Naive thymus-derived CD8-positive, alpha-beta T cell (primary cell): ENCODE measurements at regions of chr3 and their contacts with region 1.

Region 1: DNA sequence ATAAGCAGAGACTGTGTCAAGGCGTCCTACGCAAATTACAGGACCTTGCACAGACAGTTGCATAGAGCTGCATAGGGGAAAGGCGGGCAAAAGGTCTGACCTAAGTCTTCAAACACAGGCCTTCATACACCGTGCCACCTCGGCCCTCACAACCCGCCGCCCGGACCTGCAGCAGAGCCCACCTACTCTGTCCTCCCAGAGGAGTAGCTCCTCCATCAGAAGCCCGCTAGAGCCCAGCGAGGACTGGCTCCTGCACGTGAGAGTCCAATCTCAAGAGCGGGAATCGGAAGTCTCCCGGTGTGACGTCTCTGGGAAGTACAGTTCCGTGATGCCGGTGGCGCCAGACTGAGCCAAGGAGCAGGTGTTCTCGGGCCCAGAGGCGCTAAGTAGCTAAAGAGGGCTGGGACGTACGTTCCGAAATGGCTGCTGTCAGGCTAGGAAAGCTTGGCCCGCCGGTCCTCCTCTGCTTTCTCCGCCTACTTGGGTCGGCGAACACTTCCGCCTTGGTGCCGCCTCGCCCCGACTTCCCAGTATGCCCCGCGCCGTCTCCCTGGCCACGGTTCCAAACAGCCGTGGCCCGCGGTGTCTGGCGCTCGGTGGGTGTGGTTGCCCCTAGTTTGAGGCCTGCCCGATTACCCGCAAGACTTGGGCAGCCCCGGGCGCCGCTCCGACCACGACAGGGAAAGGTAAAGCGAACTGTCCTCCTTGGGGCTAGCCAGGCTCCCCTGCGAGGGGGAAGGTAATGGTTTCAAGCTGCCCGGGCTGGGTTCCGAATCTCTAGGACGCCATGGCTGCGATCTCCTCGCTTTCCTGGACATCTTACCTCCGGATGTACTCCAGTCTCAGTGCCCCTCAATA is at the starts of genes ASTE1 and NEK11:
- DNase-seq: peak; percentile 84 to 97 (median 94)
- ATAC-seq: peak; percentile 93 to 95
- H3K4me3 Mint-ChIP-seq: peak within 1 kb of the TSS; percentile 87 to 96 (median 92)
- H3K27ac Mint-ChIP-seq: peak within 1 kb of the TSS; percentile 96 to 99 (median 98)
- H3K4me1 Mint-ChIP-seq: peaks cover 28 to 60% (median 55%) of the 10 kb centered on the region in 4 donors
- H3K27me3 Mint-ChIP-seq: no peaks in the 10 kb centered on the region
- polyA plus RNA-seq, gene ASTE1: 16.3 to 25.4 (median 22.8) TPM
- polyA plus RNA-seq, gene NEK11: 0.82 to 2.3 (median 1.2) TPM

Region 2: DNA sequence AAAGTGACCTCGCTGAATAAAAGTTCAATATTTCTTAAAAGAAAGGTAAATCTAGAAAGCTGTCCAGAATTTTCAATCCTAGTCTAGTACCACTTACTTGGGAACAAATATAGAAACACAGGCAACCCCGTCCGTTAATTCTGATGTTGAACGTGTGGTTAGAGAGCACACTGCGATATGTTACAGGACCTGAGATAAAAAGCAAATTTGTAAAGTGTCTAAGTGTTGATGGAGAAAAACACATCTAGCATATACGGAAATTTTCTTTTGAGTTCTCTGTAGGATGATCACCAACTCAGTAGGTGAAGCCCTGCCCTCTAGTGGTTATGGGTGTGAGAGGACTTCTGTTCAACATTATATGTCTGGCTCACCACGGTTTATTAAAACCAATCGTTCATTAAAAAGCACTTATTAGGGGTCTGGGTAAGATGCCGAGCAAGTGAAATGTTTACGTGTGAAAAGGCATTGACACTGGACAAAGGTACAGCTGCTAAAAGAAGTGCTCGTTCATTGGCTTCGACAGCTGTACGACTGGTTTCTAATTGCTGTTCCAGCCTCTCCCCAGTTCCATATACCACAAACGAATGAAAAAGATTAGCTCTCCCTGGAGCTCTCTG is 133.7 kb before region 1 on chr3:
- POLR2A ChIA-PET with region 1: interaction called, 24 read pairs
- DNase-seq: peak; percentile 17 to 86 (median 66)
- ATAC-seq: peak; percentile 56 to 68
- H3K4me3 Mint-ChIP-seq: peak overlapping the region; percentile 88 to 98 (median 96)
- H3K27ac Mint-ChIP-seq: peak overlapping the region; percentile 96 to 100 (median 99)
- H3K4me1 Mint-ChIP-seq: peaks cover 15 to 41% (median 37%) of the 10 kb centered on the region in 4 donors
- H3K27me3 Mint-ChIP-seq: no peaks in the 10 kb centered on the region

Region 3: DNA sequence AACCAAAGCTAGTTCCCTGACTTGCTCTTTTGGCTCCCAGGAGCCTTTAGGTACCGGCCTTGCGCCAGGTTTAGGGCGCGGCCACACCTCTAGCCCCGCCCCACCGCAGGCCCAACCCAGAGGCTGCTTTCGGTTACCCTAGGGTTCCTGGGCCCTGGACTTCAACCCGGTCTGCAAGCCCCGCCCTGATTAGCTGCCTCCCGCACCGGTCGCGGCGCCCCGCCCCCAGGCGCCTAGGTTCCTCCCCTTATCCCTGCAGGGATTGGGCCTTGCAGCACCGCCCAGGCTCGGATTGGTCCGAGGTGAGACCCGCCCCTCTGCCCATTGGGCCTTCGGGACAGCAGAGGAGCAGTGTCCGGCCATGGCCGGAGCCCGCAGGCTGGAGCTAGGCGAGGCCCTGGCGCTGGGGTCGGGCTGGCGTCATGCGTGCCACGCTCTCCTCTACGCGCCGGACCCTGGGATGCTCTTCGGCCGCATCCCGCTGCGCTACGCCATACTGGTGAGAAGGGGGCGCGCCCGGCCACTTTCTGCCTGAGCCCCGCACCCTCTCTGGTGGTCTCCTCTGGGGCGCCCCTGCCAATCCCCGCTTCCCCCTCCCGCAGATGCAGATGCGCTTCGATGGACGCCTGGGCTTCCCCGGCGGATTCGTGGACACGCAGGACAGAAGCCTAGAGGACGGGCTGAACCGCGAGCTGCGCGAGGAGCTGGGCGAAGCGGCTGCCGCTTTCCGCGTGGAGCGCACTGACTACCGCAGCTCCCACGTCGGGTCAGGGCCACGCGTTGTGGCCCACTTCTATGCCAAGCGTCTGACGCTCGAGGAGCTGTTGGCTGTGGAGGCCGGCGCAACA is 355.1 kb after region 1 on chr3 and contains the start of gene NUDT16:
- POLR2A ChIA-PET with region 1: interaction called, 11 read pairs
- DNase-seq: peak; percentile 84 to 97 (median 92)
- ATAC-seq: peak; percentile 96 to 97
- H3K4me3 Mint-ChIP-seq: peak within 1 kb of the TSS; percentile 93 to 99 (median 98)
- H3K27ac Mint-ChIP-seq: peak within 1 kb of the TSS; percentile 88 to 98 (median 96)
- H3K4me1 Mint-ChIP-seq: peaks cover 26 to 40% (median 32%) of the 10 kb centered on the region in 4 donors
- H3K27me3 Mint-ChIP-seq: no peaks in the 10 kb centered on the region
- polyA plus RNA-seq, gene NUDT16: 2.4 to 3.8 (median 2.9) TPM